Right lobe of liver (tissue), 6 donors: ENCODE measurements at regions of chr17 and their contacts with region 1.

Region 1: DNA sequence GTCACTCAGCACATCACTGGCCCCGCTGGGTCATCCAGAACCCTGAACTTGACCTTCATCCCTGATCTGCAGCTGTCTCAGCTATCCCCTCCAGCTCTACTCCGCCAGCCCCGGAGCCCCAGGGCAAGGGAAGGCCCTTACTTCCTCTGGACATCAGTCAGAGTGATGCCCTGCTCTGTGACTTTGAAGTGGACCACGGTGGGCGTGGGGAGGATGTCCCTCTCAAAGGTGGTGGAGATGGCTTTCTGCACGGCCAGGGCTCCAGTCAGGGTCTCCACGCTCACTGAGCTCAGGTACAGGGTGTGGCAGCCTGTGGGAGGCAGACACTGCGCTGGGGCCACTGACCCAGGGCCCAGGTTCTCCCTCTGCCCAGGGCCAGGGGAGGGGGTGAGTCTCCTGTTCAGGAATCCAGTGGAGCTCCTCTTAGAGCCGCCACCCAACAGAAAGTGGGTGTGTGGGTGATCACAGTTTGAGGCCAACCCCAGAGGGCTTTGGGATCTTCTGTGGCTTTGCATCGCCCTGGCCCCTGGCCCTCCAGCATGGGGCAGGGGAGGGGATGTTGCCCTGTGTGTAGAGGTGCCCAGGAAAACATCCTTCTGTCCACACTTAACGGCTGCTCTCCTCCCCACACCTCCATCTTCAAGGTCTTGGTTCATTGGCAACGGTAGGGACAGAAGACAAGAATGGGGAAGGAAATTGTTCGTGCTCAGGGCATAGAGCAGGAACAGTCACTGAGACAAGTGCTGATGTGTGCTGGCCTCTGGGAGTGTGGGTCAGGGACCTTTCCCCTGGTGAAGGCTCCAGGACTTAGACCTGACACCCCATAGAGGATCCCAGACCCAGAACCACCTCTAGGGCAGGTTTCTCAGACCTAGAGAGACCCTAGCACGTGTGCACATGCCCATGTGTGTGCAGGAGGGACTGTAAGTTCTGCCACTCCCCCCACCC is 21.6 kb downstream of the TNS4 start:
- DNase-seq: no peak
- ATAC-seq: no peak
- H3K4me3 ChIP-seq: no peak overlapping the region
- H3K27ac ChIP-seq: no peak overlapping the region
- H3K4me1 ChIP-seq: peaks cover 0 to 7% (median 3%) of the 10 kb centered on the region in 4 donors
- H3K27me3 ChIP-seq: no peaks in the 10 kb centered on the region
- CTCF ChIP-seq: no peak
- POLR2A ChIP-seq: no peak

Region 2: DNA sequence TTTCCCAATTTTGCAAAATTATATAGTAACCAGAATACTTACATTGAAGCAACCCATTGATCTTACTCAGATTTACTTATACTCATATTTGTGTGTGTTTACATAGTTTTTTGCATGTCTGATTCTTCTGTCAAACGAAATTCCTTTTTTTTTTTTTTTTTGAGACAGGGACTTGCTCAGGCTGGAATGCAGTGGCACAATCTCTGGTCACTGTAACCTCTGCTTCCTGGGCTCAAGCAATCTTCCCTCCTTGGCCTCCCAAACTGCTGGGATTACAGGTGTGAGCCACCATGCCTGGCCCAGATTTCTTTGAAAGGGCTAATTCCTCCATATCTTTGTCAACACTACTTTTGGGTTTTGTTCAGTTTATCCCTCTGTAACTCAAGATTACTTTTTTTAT is 92.1 kb before region 1 on chr17:
- intact Hi-C with region 1: no loop called
- DNase-seq: no peak
- ATAC-seq: no peak
- H3K4me3 ChIP-seq: no peak overlapping the region
- H3K27ac ChIP-seq: no peak overlapping the region
- H3K4me1 ChIP-seq: no peaks in the 10 kb centered on the region
- H3K27me3 ChIP-seq: no peaks in the 10 kb centered on the region
- CTCF ChIP-seq: no peak
- POLR2A ChIP-seq: no peak

Region 3: DNA sequence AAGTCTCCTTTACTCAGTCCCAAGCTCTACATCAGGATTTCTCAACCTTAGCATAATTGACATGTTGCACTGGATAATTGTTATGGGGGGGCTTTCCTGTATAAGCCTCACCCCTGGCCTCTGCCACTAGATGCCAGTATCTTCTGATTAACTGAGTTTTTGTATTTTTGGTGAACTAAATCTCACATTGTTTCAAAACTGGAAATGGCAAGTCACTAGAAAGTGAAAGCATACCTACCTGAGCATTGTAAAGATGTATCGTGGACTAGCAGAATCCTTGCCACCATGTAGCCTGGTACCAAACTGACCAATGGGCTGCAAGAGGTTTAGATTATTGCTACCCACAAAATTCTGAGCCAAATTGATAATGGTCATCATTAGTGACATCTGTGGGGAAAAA is 77.1 kb before region 1 on chr17:
- intact Hi-C with region 1: no loop called
- DNase-seq: no peak
- ATAC-seq: no peak
- H3K4me3 ChIP-seq: no peak overlapping the region
- H3K27ac ChIP-seq: no peak overlapping the region
- H3K4me1 ChIP-seq: peaks cover 0 to 6% (median 0%) of the 10 kb centered on the region in 4 donors
- H3K27me3 ChIP-seq: no peaks in the 10 kb centered on the region
- CTCF ChIP-seq: no peak
- POLR2A ChIP-seq: no peak

Region 4: DNA sequence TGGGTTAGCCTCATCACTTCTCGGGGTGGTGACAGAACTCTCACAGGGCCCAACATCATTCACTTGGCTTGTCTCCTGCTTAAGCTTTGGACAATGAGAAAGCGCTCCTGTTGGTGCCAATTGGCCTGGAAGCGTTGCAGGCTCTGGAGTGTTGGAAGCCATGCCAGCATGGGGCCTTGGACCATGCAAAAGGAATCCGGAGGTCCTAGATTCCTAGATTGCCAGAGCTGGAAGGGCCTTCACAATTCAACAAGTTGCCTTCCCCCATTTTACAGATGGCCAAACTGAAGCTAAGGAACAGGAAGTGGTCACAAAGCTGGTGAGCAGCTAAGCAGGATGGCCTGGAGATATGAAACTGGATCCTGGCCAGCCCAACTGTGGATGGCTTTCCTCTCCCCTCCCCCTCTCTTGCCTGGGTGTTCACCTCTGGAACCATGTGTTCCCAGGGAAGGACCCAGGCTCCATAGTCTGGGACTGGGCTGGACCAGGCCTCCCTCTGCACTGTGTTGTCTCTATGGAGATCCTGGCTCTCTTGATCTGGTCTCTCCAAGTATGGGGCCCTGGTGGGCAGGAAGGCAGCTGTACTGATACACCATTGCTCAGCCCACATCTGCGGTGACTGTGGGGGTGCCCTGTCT is 42.6 kb before region 1 on chr17:
- intact Hi-C with region 1: loop called in 1 of 2 experiments (anchors 5 kb)
- DNase-seq: no peak
- ATAC-seq: peak in 1 of 4 donors; percentile 8
- H3K4me3 ChIP-seq: no peak overlapping the region
- H3K27ac ChIP-seq: no peak overlapping the region
- H3K4me1 ChIP-seq: no peaks in the 10 kb centered on the region
- H3K27me3 ChIP-seq: no peaks in the 10 kb centered on the region
- CTCF ChIP-seq: no peak
- POLR2A ChIP-seq: no peak